Sigmoid colon (tissue), 7 donors: ENCODE measurements at regions of chr15 and their contacts with region 1.

Region 1: DNA sequence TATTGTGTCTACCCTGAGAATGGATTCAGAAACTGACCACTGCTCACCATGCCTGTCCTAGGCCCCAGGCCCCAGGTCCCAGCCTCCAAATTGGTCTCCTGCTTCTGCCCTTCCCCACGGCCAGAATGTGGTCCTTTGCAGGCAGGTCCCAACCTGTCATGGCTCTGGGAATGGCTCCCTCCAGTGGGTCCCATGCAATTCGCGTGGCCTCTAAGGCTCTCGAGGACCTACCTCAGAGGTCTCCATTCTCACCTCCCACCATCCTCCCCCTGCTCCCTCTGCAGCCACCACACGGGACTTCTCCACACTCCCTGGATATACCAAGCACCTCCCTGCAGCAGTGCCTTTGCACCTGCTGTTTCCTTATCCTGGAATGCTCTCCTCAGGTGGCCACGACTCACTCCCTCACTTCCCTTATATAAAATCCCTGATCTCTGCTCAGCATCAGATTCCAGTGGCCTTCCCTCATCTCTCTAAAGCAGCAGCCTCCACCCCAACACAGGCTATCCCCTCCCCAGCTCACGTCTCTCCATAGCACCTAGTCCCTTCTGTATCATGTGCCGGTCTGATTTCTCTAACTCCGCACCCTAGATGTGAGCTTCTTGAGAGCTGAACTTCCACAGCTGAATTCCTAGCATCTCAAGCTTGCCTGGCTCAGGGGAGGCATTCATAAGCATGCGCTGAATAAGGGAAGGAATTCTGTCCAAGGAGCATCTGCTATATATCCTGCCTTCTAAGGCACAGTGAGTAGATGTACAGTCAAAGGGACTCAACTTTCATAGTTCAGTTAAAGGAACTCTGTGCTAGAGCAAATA is 56.9 kb downstream of the ARRDC4 start:
- DNase-seq: peak; percentile 68
- H3K4me3 ChIP-seq: peak overlapping the region; percentile 29 to 57 (median 50)
- H3K27ac ChIP-seq: peak overlapping the region; percentile 75 to 93 (median 88)
- H3K4me1 ChIP-seq: peaks cover 0 to 28% (median 17%) of the 10 kb centered on the region in 4 donors
- H3K27me3 ChIP-seq: no peaks in the 10 kb centered on the region
- CTCF ChIP-seq: no peak
- EP300 ChIP-seq: no peak
- POLR2A ChIP-seq: peak in 1 of 2 donors; percentile 66

Region 2: DNA sequence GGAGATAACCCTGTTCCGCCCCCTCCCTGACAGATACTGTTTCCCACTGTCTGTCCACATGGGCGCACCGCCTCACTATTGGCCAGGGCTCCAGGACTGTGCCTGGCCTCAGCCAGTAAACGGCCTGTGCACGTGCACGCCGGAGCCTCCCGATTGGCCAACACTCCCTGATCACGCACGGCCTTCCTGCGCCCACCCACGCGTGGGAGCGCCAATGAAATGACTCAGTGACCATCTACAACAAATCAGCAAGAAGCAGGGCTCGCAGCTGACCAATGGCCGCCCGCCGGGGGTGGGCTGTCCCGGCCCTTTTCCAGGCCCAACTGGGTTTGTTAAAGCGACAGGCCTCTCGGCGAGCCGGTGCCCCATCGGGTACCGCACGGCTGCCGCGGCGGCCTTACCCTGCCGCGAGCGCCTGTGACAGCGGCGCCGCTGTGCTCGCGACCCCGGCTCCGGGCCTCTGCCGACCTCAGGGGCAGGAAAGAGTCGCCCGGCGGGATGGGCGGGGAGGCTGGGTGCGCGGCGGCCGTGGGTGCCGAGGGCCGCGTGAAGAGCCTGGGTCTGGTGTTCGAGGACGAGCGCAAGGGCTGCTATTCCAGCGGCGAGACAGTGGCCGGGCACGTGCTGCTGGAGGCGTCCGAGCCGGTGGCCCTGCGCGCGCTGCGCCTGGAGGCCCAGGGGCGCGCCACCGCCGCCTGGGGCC is 56.8 kb before region 1 on chr15 and contains the start of gene ARRDC4:
- intact Hi-C with region 1: loop called (anchors 2 kb)
- DNase-seq: peak; percentile 100
- H3K4me3 ChIP-seq: peak within 1 kb of the TSS; percentile 71 to 91 (median 84)
- H3K27ac ChIP-seq: peak within 1 kb of the TSS; percentile 94 to 98 (median 98)
- H3K4me1 ChIP-seq: peaks cover 0 to 40% (median 36%) of the 10 kb centered on the region in 4 donors
- H3K27me3 ChIP-seq: no peaks in the 10 kb centered on the region
- CTCF ChIP-seq: no peak
- EP300 ChIP-seq: peak in 1 of 4 donors; percentile 33
- POLR2A ChIP-seq: peak; percentile 72 to 82
- total RNA-seq, gene ARRDC4: 116 to 205 (median 170) TPM

Region 3: GRCh38 chr15:98043160-98044014 is 26.0 kb after region 1 on chr15:
- intact Hi-C with region 1: no loop called
- DNase-seq: no peak
- H3K4me3 ChIP-seq: no peak overlapping the region
- H3K27ac ChIP-seq: no peak overlapping the region
- H3K4me1 ChIP-seq: no peaks in the 10 kb centered on the region
- H3K27me3 ChIP-seq: no peaks in the 10 kb centered on the region
- CTCF ChIP-seq: peak in 1 of 4 experiments; percentile 20
- EP300 ChIP-seq: no peak
- POLR2A ChIP-seq: no peak

Region 4: DNA sequence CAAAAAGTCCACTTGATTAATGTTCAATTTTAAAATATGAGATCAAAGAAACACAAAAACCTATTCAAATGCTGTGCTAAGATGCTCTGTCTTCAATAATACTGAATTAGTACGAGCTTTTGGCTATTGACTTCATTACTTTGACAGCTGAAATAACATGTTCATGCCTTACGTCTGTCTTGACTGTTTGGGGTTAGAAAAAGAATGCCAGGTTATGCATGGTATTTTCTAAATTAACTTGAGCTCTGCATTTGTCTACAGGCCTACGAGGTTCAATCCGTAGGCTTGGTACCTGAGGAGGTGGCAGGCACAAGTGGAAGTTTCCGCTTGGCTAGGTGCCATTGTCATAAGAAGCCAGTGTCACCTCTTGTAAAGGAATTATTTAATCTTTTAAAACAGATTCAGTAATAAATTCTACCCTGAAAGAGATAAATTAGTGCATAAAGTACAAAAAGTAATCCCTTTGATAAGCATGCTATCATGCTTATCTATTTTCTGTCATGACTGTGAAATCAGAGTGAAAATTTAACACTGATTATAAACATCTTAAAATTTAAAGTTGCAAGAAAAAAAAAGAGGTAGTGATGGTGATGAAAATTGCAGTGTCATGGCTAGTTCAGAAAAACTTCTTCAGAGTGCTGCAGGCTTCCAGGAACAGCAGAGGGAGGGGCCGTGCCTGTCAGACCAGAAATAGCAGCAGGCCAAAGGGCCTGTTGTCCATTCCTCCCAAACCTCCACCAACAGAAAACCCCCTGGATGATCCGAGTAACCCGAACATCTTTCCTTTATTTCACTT is 58.9 kb after region 1 on chr15:
- intact Hi-C with region 1: loop called (anchors 5 kb)
- DNase-seq: peak; percentile 78
- H3K4me3 ChIP-seq: no peak overlapping the region
- H3K27ac ChIP-seq: peak overlapping the region; percentile 72 to 80 (median 76)
- H3K4me1 ChIP-seq: peaks cover 0 to 27% (median 23%) of the 10 kb centered on the region in 4 donors
- H3K27me3 ChIP-seq: no peaks in the 10 kb centered on the region
- CTCF ChIP-seq: no peak
- EP300 ChIP-seq: no peak
- POLR2A ChIP-seq: no peak

Region 5: DNA sequence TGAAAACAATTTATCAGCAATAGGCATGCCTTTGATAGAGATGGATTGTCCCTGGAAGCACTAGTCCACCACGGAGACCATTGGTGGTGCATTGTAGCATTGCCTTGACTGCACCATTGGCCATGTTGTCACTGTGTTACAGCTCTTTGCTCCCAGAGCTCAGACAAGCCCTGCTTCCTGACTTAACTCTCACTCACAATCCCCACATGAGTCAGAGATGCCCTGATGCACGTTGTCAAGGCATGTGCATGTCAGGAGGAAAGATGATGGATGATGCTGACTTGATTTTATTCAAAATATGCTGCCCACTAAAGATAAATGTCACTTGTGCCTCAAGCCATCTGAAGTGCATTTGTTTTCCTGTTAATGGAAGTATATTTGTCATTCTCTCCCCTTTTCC is 209.2 kb after region 1 on chr15:
- intact Hi-C with region 1: no loop called
- DNase-seq: no peak
- H3K4me3 ChIP-seq: no peak overlapping the region
- H3K27ac ChIP-seq: no peak overlapping the region
- H3K4me1 ChIP-seq: no peaks in the 10 kb centered on the region
- H3K27me3 ChIP-seq: no peaks in the 10 kb centered on the region
- CTCF ChIP-seq: no peak
- EP300 ChIP-seq: no peak
- POLR2A ChIP-seq: no peak